Lower lobe of right lung (tissue), 2 donors: ENCODE measurements at regions of chr4 and their contacts with region 1.

Region 1: DNA sequence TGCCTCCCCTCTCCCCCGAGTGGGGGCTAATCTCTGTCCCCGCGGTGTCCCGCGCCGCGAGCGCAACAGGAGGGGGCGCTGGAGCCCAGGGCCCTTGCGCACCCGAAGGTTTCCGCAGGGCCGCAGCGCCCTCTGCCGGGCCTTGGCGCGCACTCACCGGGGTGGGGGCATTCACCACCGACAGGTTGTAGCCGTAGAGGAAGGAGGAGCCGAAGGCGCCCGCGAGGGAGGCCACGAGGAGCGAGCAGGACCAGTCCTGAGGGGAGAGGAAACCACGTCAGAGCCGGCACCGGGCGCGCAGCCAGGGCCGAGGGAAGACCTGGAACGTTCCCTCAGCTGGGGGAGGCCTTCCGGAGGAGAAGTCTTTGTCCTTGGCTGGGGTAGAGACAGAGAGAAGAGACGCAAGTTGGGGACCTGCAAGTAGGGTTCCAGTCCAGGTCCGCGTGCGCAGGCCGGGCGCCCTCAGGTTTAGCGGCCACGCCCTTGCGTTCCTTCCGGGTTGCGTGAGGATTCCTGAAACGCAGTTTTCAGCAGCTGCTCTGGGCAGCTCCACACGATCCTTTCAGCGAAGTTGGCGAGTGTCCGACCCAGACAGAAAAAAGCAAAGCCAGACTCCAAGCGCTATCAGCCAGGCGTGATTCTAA is 2.4 kb downstream of the SLC2A9 start:
- DNase-seq: peak; percentile 98
- ATAC-seq: peak; percentile 98 to 99
- H3K4me3 ChIP-seq: peak overlapping the region; percentile 58
- H3K27ac ChIP-seq: peak overlapping the region; percentile 90
- H3K4me1 ChIP-seq: peaks cover 41% of the 10 kb centered on the region
- H3K27me3 ChIP-seq: no peaks in the 10 kb centered on the region
- CTCF ChIP-seq: peak; percentile 97

Region 2: DNA sequence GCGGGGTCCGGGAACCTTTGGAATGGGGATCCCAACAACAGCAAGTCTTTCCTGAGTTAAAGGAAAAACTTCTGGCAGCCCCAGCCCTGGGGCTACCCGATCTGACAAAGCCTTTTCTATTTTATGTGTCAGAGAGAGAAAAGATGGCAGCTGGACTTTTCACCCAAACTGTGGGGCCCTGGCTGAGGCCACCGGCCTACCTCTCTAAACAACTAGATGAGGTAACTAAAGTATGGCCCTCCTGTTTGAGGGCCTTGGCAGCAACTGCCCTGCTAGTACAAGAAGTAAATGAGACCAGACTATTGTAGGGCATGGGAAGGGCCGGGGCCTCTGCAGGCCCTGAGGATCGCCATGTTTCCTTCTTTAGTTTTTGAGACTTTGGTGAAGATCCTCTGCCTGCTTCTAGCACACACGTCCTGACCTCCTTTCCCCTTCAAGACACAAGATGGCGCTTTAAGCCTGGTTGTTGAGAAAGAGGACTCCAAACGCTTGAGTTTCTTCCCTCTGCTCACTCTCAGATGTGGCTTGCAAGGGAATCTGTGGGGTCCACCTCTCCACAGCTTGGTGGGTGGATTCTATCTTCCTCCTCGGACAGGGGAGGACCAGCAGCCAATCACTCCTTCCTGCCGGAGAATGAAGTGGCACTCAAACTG is 256.0 kb before region 1 on chr4:
- intact Hi-C with region 1: loop called (anchors 10 kb)
- DNase-seq: no peak
- ATAC-seq: no peak
- H3K4me3 ChIP-seq: no peak overlapping the region
- H3K27ac ChIP-seq: no peak overlapping the region
- H3K4me1 ChIP-seq: no peaks in the 10 kb centered on the region
- H3K27me3 ChIP-seq: no peaks in the 10 kb centered on the region
- CTCF ChIP-seq: peak; percentile 61

Region 3: DNA sequence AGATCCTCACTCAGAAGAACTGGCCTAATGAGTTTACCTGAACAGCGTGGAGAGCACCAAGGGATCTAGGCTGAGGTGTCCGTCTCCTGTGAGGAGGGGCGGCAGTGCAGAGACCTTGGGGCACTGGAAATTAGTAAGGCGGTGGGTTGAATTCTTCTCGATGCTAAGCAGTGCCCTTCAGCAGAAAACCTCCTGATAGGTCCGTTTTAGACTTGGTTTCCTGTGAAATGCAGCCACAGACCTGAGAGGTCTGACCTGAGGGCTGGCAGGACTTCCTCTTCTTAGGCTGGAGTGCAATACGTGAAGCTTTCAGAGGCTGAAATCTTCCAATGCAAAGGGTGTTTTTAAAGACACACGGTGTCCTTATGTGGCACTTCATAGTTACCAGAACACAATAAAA is 665.7 kb after region 1 on chr4 and contains the start of gene CLNK:
- intact Hi-C with region 1: no loop called
- DNase-seq: no peak
- ATAC-seq: no peak
- H3K4me3 ChIP-seq: no peak within 1 kb of the TSS
- H3K27ac ChIP-seq: no peak within 1 kb of the TSS
- H3K4me1 ChIP-seq: no peaks in the 10 kb centered on the region
- H3K27me3 ChIP-seq: no peaks in the 10 kb centered on the region
- CTCF ChIP-seq: no peak
- total RNA-seq, gene CLNK: 0.09 TPM